OCI-LY7 (cell line): ENCODE measurements at regions of chr3 and their contacts with region 1.

Region 1: GRCh38 chr3:73508330-73508954 is 116.3 kb downstream of the PDZRN3 start:
- DNase-seq: peak; percentile 60
- H3K4me3 ChIP-seq: no peak overlapping the region
- H3K27ac ChIP-seq: no peak overlapping the region
- H3K4me1 ChIP-seq: no peaks in the 10 kb centered on the region
- CTCF ChIP-seq: peak; percentile 85

Region 2: GRCh38 chr3:73848173-73848906 is 339.9 kb after region 1 on chr3:
- CTCF ChIA-PET with region 1: no interaction called
- POLR2A ChIA-PET with region 1: no interaction called
- intact Hi-C with region 1: loop called (anchors 5 kb)
- DNase-seq: no peak
- H3K4me3 ChIP-seq: no peak overlapping the region
- H3K27ac ChIP-seq: no peak overlapping the region
- H3K4me1 ChIP-seq: no peaks in the 10 kb centered on the region
- CTCF ChIP-seq: peak; percentile 76